A673 (cell line): ENCODE measurements at regions of chr2 and their contacts with region 1.

Region 1: GRCh38 chr2:199443589-199444130 is 14.1 kb downstream of the SATB2 start:
- DNase-seq: no peak
- H3K4me3 ChIP-seq: no peak overlapping the region
- H3K27ac ChIP-seq: no peak overlapping the region
- H3K4me1 ChIP-seq: no peaks in the 10 kb centered on the region
- H3K27me3 ChIP-seq: no peaks in the 10 kb centered on the region
- CTCF ChIP-seq: no peak

Region 2: DNA sequence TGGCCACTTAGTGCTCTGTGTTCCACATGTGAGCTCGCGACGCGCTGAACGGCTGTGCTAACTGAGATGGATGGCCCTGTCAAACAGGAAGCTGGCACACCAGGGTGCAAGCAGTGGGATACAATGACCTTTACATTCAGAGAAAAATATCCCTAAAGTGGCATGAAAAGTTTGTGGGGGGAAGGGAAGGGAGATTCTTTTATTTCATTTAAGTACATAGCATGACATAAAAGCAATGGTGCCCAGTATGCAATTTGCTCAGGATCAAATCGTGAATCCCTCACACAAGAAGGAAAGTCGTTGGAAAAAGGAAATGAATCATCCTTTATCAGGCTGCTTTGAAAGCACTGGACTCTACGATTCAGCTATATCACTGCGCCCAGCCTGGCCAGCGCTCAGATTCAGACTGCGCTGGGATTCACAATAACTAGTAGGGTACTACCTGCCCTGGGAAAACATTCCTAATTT is 11.9 kb before region 1 on chr2:
- CTCF ChIA-PET with region 1: no interaction called
- POLR2A ChIA-PET with region 1: interaction called, 16 read pairs
- intact Hi-C with region 1: no loop called
- DNase-seq: peak; percentile 97
- H3K4me3 ChIP-seq: peak overlapping the region; percentile 14
- H3K27ac ChIP-seq: peak overlapping the region; percentile 57
- H3K4me1 ChIP-seq: peaks cover 39% of the 10 kb centered on the region
- H3K27me3 ChIP-seq: no peaks in the 10 kb centered on the region
- CTCF ChIP-seq: no peak

Region 3: GRCh38 chr2:199462956-199463692 is 19.5 kb after region 1 on chr2:
- CTCF ChIA-PET with region 1: no interaction called
- POLR2A ChIA-PET with region 1: no interaction called
- intact Hi-C with region 1: no loop called
- DNase-seq: peak; percentile 84
- H3K4me3 ChIP-seq: peak overlapping the region; percentile 73
- H3K27ac ChIP-seq: peak overlapping the region; percentile 63
- H3K4me1 ChIP-seq: peaks cover 7% of the 10 kb centered on the region
- H3K27me3 ChIP-seq: peaks cover 29% of the 10 kb centered on the region
- CTCF ChIP-seq: peak; percentile 94

Region 4: GRCh38 chr2:200635251-200635650 is 1191.6 kb after region 1 on chr2:
- CTCF ChIA-PET with region 1: no interaction called
- POLR2A ChIA-PET with region 1: no interaction called
- intact Hi-C with region 1: loop called (anchors 10 kb)
- DNase-seq: peak; percentile 9
- H3K4me3 ChIP-seq: no peak overlapping the region
- H3K27ac ChIP-seq: no peak overlapping the region
- H3K4me1 ChIP-seq: peaks cover 3% of the 10 kb centered on the region
- H3K27me3 ChIP-seq: no peaks in the 10 kb centered on the region
- CTCF ChIP-seq: no peak